ENCODE measurements at regions of chr19 and their contacts with region 1.

Region 1: DNA sequence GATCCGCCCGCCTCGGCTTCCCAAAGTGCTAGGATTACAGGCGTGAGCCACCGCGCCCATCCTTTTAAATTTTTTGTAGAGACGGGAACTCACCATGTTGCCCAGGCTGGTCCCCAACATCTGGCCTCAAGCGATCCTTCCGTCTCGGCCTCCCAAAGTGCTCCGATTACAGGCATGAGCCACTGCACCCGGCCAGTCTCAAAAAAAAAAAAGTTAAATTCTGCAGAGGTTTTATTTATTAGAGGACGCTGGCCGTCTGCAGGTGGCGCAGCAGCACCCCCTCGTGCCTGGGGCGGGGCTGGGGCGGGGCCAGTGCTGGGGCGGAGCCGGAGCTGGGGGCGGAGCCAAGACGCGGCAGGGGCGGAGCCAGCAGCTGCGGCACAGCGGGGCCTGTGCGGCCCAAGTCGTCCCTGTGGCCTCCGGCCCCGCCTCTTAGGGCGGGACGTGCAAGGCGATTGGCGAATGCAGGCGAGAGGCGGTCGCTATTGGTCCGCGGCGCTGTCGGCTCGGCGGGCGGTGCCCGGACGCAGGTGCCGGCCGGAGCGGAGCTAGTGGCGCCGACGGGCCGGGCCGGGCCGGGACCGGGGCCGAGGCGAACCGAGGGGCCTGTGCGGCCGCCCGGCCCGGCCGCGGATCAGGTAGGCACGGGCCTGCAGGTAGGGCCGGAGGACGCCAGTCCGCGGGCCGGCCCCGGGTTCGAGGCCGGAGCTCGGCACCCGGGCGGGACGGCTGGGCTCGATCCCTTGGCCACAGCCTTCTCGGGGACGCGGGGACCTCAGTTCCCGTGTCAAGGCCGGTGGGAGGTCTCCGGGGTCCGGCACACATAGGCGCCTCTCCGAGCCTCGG is at the start of gene MARCHF2:
- DNase-seq: peak; percentile 96
- ATAC-seq: peak; percentile 99
- H3K4me3 Mint-ChIP-seq: peak within 1 kb of the TSS; percentile 70
- H3K27ac Mint-ChIP-seq: no peak within 1 kb of the TSS
- H3K4me1 Mint-ChIP-seq: peaks cover 9% of the 10 kb centered on the region
- H3K27me3 Mint-ChIP-seq: no peaks in the 10 kb centered on the region
- CTCF ChIP-seq: no peak
- total RNA-seq, gene MARCHF2: 24.8 and 25.6 TPM in 2 replicates

Region 2: GRCh38 chr19:7868676-7869452 is 544.1 kb before region 1 on chr19:
- CTCF ChIA-PET with region 1: no interaction called
- POLR2A ChIA-PET with region 1: no interaction called
- intact Hi-C with region 1: no loop called
- DNase-seq: peak; percentile 83
- ATAC-seq: peak; percentile 75
- H3K4me3 Mint-ChIP-seq: peak overlapping the region; percentile 81
- H3K27ac Mint-ChIP-seq: peak overlapping the region; percentile 73
- H3K4me1 Mint-ChIP-seq: peaks cover 41% of the 10 kb centered on the region
- H3K27me3 Mint-ChIP-seq: peaks cover 30% of the 10 kb centered on the region
- CTCF ChIP-seq: peak; percentile 56

Region 3: GRCh38 chr19:8389891-8390616 is 23.0 kb before region 1 on chr19 and contains the start of gene RAB11B:
- CTCF ChIA-PET with region 1: interaction called, 4 read pairs
- POLR2A ChIA-PET with region 1: interaction called, 17 read pairs
- intact Hi-C with region 1: loop called (anchors 1 kb)
- DNase-seq: peak; percentile 92
- ATAC-seq: peak; percentile 88
- H3K4me3 Mint-ChIP-seq: peak within 1 kb of the TSS; percentile 95
- H3K27ac Mint-ChIP-seq: peak within 1 kb of the TSS; percentile 94
- H3K4me1 Mint-ChIP-seq: peaks cover 27% of the 10 kb centered on the region
- H3K27me3 Mint-ChIP-seq: no peaks in the 10 kb centered on the region
- CTCF ChIP-seq: no peak
- total RNA-seq, gene RAB11B: 92.1 and 100 TPM in 2 replicates

Region 4: GRCh38 chr19:8444645-8445487 is 31.9 kb after region 1 on chr19 and contains the start of gene HNRNPM:
- CTCF ChIA-PET with region 1: interaction called, 8 read pairs
- POLR2A ChIA-PET with region 1: interaction called, 56 read pairs
- intact Hi-C with region 1: loop called (anchors 1 kb)
- DNase-seq: peak; percentile 100
- ATAC-seq: peak; percentile 94
- H3K4me3 Mint-ChIP-seq: peak within 1 kb of the TSS; percentile 98
- H3K27ac Mint-ChIP-seq: peak within 1 kb of the TSS; percentile 96
- H3K4me1 Mint-ChIP-seq: peaks cover 42% of the 10 kb centered on the region
- H3K27me3 Mint-ChIP-seq: no peaks in the 10 kb centered on the region
- CTCF ChIP-seq: no peak
- total RNA-seq, gene HNRNPM: 282 and 287 TPM in 2 replicates

Region 5: DNA sequence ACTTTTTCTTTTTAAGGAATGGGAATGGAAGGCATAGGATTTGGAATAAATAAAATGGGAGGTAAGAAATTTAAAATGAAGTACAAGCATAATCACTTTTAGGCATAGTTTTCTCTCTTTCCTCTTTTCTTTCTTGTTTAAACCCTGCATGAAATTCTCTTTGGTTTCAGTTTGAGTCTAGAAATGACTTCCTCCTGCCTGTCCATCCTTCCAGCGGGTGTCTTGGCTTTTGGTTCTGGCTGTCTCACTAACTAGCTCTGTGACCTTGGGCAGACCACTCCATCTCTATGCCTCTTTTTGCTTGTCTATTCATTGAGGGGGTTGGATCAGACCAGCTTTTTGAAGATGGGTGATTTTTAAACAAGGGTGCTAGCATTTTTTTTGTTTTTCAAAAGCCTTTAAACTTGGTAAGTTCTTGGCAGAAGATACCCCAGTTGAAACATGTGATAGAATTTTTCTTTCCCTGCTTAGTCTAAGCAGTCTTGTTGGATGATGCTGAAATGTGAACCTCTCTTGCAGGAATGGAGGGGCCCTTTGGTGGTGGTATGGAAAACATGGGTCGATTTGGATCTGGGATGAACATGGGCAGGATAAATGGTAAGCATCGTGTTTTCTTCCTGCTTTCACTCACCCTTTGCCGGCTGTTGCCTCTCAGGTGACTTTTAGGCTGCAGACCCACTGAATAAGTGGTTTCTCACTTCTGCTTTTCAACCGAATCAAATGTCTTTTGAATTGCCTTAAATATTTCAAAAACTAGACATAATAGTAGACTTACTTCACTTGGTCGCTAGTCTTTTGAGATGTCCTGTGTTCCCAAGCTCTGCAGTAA is 60.9 kb after region 1 on chr19:
- CTCF ChIA-PET with region 1: interaction called, 7 read pairs
- POLR2A ChIA-PET with region 1: interaction called, 3 read pairs
- intact Hi-C with region 1: loop called (anchors 1 kb)
- DNase-seq: no peak
- ATAC-seq: peak; percentile 82
- H3K4me3 Mint-ChIP-seq: peak overlapping the region; percentile 76
- H3K27ac Mint-ChIP-seq: peak overlapping the region; percentile 89
- H3K4me1 Mint-ChIP-seq: peaks cover 54% of the 10 kb centered on the region
- H3K27me3 Mint-ChIP-seq: no peaks in the 10 kb centered on the region
- CTCF ChIP-seq: no peak

Region 6: DNA sequence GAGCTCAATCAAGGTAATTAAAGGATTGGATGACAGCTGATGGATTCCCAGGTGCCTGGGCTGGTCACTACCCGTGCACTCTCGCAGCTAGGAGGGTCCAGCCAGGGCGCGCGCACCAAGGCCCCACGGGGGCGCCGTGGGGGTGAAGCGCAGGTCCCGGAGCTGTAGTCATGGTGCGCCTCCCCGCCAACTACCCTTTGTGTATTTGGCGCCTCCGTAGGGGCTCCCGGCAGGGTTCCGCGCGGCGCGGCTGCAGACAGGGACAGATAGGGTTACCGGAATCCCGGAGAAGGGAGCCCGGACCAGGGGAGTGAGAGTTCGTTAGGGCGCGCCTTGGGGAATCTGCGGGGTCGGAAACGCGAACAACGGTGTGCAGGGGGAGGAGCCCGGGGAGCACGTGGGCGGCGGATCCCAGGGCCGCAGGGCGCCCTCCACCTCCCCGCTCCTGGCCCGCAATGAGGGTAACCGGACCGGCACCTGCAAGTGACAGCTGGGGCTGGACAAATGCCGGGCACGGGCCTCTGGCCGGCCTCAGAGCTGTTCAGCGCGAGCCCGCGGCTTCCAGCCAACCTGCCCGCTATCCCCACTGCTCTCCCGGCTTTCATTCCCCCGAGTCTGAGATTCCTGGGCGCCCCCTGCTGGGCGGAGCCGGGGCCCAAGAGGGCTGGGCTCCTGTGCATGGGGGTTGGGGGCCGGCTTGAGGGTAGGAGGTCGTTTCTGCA is 92.8 kb after region 1 on chr19:
- CTCF ChIA-PET with region 1: interaction called, 16 read pairs
- POLR2A ChIA-PET with region 1: interaction called, 6 read pairs
- intact Hi-C with region 1: loop called (anchors 1 kb)
- DNase-seq: peak; percentile 78
- ATAC-seq: peak; percentile 72
- H3K4me3 Mint-ChIP-seq: peak overlapping the region; percentile 91
- H3K27ac Mint-ChIP-seq: no peak overlapping the region
- H3K4me1 Mint-ChIP-seq: peaks cover 11% of the 10 kb centered on the region
- H3K27me3 Mint-ChIP-seq: peaks cover 2% of the 10 kb centered on the region
- CTCF ChIP-seq: no peak

Region 7: DNA sequence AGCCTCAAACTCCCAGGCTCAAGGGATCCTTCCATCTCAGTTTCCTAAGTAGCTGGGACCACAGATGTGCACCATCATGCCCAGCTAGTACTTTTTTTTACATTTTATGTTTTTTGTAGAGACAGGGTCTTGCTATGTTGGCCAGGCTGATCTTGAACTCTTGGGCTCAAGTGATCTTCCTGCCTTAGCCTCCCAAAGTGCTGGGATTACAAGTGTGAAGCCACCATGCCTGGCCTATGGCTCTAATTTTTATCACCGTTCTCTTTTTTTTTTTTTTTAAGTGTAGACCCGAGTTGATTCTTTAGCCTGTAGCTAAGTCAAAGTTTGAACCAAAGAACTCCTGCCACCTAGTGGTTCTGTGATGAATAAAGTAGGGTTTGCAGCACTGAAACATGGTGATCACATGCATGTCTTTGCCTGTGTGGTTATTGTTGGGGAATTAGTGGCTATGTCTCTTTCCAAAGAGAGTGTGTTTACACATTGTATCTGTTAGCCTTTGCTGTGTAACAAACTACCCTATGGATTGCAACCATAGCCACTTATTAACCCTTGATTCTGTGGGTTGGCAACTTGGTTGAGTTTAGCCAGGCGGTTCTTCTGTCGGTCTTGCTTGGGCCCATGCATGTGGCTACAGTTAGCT is 229.0 kb after region 1 on chr19:
- CTCF ChIA-PET with region 1: no interaction called
- POLR2A ChIA-PET with region 1: no interaction called
- intact Hi-C with region 1: loop called (anchors 2 kb)
- DNase-seq: no peak
- ATAC-seq: no peak
- H3K4me3 Mint-ChIP-seq: no peak overlapping the region
- H3K27ac Mint-ChIP-seq: no peak overlapping the region
- H3K4me1 Mint-ChIP-seq: no peaks in the 10 kb centered on the region
- H3K27me3 Mint-ChIP-seq: peaks cover 34% of the 10 kb centered on the region
- CTCF ChIP-seq: no peak

Measured in activated B cell treated with CpG ODN at 0.5 μM for 24 hours (primary cell).